ENCODE measurements at regions of chr7 and their contacts with region 1.

Region 1: DNA sequence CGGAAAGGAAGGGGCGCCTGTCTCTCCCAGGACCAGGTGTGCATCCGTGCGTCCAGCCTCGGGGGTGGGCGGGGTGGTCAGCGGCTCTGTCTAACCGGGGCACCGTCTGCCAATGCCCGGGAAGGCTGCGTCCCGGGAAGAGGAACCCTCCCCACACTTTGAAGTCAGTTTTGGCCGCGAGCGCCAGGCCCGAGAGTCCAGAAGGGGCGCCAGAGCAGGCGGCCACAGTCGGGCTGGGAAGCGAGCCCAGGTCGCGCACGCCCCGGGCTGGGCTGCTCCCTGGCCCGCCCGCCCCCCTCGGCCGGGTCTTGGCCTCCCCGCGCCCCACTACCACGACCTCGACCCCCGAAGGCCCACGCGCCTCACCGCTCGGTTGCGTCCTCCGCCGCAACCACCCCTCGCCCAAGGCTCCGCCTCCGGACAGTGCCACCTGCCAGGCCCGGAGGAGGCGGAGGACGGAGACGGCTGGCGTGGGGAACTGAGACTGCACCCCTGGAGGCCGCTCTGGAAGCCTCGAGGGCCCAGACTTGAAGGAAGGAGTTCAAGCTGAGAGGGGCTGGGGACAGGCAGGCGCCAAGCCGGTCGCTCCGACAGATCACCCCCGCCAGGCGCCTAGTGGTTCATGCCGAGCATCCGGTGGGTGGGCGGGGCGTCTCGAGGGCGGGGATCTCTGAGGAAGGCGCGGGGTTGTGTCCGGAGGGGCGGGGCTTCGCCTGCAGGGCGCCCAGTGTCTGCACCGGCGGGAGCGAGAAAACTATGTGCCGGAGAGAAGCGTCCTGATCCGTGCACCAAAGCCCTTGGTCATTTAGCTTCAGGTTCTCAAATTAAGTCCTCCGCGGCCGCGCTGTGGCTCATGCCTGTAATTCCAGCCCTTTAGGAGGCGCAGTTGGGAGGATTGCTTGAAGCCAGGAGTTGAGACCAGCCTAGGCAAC is at the start of gene BRAT1:
- DNase-seq: peak; percentile 98
- H3K4me3 Mint-ChIP-seq: peak within 1 kb of the TSS; percentile 86
- H3K27ac Mint-ChIP-seq: peak within 1 kb of the TSS; percentile 93
- H3K4me1 Mint-ChIP-seq: peaks cover 29% of the 10 kb centered on the region
- H3K27me3 Mint-ChIP-seq: no peaks in the 10 kb centered on the region
- total RNA-seq, gene BRAT1: 26.8 to 27.3 TPM

Region 2: GRCh38 chr7:2314209-2314955 is 241.0 kb before region 1 on chr7 and contains the start of gene SNX8:
- CTCF ChIA-PET with region 1: no interaction called
- intact Hi-C with region 1: loop called (anchors 5 kb)
- DNase-seq: peak; percentile 95
- H3K4me3 Mint-ChIP-seq: peak within 1 kb of the TSS; percentile 88
- H3K27ac Mint-ChIP-seq: no peak within 1 kb of the TSS
- H3K4me1 Mint-ChIP-seq: peaks cover 13% of the 10 kb centered on the region
- H3K27me3 Mint-ChIP-seq: no peaks in the 10 kb centered on the region
- total RNA-seq, gene SNX8: 28.7 to 29.6 TPM

Region 3: GRCh38 chr7:2477447-2478398 is 77.7 kb before region 1 on chr7:
- CTCF ChIA-PET with region 1: no interaction called
- intact Hi-C with region 1: loop called (anchors 5 kb)
- DNase-seq: peak; percentile 68
- H3K4me3 Mint-ChIP-seq: no peak overlapping the region
- H3K27ac Mint-ChIP-seq: no peak overlapping the region
- H3K4me1 Mint-ChIP-seq: no peaks in the 10 kb centered on the region
- H3K27me3 Mint-ChIP-seq: no peaks in the 10 kb centered on the region

Region 4: GRCh38 chr7:2523941-2524807 is 31.2 kb before region 1 on chr7:
- CTCF ChIA-PET with region 1: no interaction called
- intact Hi-C with region 1: loop called (anchors 1 kb)
- DNase-seq: no peak
- H3K4me3 Mint-ChIP-seq: no peak overlapping the region
- H3K27ac Mint-ChIP-seq: no peak overlapping the region
- H3K4me1 Mint-ChIP-seq: peaks cover 58% of the 10 kb centered on the region
- H3K27me3 Mint-ChIP-seq: no peaks in the 10 kb centered on the region

Region 5: DNA sequence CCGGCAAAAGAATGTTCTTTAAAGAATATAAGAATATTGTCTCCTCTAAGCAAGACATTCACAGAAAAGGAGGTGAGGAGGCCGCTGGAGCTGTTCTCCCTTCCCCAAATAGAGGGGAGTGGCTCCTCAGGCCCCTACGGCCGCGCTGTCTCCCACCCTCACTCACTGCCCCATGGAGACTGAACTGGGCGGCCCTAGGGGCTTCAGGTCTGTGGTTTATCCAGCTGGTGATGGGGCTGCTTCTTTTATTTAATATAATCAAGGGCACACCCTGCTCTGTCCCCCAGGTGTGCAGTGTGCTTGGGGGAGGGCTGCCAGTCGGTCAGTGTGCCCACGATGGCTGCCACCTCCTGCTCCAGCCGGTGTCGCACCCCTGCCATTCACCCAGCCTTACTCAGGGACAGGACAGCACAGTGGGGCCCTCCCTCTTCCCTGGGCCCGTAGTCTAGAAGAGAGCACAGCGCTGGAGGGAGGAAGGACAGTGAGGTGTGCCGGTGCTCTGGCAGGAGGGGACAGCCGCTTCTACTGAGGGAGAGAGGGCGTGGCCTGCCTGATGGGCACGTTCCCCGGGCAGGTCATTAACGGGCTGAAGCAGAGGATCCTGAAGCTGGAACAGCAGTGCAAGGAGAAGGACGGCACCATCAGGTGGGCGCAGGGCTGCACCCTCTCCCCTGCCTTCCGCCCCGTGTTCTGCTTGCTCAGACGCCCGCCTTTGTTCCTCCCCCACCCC is 26.8 kb after region 1 on chr7:
- CTCF ChIA-PET with region 1: no interaction called
- intact Hi-C with region 1: no loop called
- DNase-seq: no peak
- H3K4me3 Mint-ChIP-seq: no peak overlapping the region
- H3K27ac Mint-ChIP-seq: no peak overlapping the region
- H3K4me1 Mint-ChIP-seq: no peaks in the 10 kb centered on the region
- H3K27me3 Mint-ChIP-seq: no peaks in the 10 kb centered on the region

Region 6: DNA sequence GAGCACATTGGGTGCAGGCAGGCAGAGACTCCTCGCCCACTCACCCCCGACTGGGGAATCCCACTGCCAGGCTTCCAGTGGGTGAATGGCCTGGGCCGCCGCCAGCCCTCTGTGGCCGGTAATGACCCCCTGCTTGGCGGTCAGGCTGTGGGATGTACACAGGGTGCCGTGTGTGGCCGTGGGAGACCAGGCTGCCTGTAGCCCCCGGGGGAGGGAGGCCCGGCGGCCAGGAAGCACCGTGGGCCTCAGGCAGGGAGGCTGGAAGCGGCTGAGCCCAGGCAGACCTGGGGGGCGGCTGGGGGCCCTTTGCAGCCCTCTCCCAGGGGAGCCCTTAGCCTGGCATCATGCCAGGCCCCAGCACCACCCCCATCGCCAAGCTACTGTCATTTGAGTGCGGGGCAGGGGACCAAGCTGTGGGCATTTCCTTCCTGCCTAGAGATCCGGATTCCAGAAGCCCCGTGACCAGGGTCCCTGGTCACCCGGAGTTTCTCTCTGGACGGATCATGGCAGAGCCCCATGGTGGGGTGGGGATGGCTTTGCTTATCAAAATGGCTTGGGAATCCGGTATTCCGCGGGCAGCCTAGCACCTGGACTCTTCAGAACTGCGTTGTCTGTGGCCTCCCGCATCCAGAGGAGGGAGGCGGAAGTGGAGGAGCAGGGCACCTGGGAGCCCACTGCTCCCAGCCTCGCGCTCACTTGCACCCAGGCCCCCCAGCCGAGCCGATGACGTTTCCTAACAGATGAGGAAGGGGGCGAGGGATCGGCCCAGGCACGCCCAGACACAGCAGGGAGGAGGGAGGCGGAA is 77.5 kb after region 1 on chr7:
- CTCF ChIA-PET with region 1: no interaction called
- intact Hi-C with region 1: loop called (anchors 1 kb)
- DNase-seq: peak; percentile 67
- H3K4me3 Mint-ChIP-seq: peak overlapping the region; percentile 92
- H3K27ac Mint-ChIP-seq: peak overlapping the region; percentile 53
- H3K4me1 Mint-ChIP-seq: peaks cover 15% of the 10 kb centered on the region
- H3K27me3 Mint-ChIP-seq: no peaks in the 10 kb centered on the region

Region 7: GRCh38 chr7:3272691-3273181 is 717.3 kb after region 1 on chr7:
- CTCF ChIA-PET with region 1: no interaction called
- intact Hi-C with region 1: no loop called
- DNase-seq: no peak
- H3K4me3 Mint-ChIP-seq: no peak overlapping the region
- H3K27ac Mint-ChIP-seq: no peak overlapping the region
- H3K4me1 Mint-ChIP-seq: no peaks in the 10 kb centered on the region
- H3K27me3 Mint-ChIP-seq: no peaks in the 10 kb centered on the region